RWPE1 (cell line): ENCODE measurements at regions of chr12 and their contacts with region 1.

Region 1: GRCh38 chr12:68040450-68041075 is 51.3 kb downstream of the IFNG-AS1 start:
- DNase-seq: peak; percentile 74
- H3K27ac ChIP-seq: no peak overlapping the region
- CTCF ChIP-seq: peak; percentile 90

Region 2: DNA sequence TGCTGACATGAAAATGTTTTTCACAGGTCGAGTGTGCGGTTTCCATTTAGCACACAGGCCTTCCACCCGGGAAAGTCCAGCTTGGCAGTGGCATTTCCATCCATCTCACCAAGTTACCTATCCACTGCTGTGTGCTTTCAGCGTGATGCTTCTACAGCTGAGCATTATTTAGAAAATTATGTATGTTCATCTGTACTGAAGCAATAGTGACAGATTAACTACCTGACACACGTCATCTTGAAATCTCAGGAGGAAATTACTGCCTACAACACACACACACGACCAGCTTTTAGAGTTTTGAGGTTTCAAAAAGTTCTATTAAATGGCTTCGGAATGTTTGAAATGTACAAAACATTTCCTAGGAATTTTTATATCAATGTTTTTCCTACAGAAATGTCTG is 11.9 kb before region 1 on chr12:
- CTCF ChIA-PET with region 1: interaction called, 14 read pairs
- POLR2A ChIA-PET with region 1: no interaction called
- DNase-seq: no peak
- H3K27ac ChIP-seq: no peak overlapping the region
- CTCF ChIP-seq: no peak